Activated CD4-positive, alpha-beta T cell treated with anti-CD3 and anti-CD28 coated beads, Interleukin-2, amount 10 ng/mL, durations not matched to agents 7 days and 5 days (primary cell): ENCODE measurements at regions of chr15 and their contacts with region 1.

Region 1: GRCh38 chr15:89993349-89993748 is 7.8 kb upstream of the ZNF710 start:
- DNase-seq: no peak
- H3K4me3 Mint-ChIP-seq: no peak overlapping the region
- H3K27ac Mint-ChIP-seq: no peak overlapping the region
- H3K4me1 Mint-ChIP-seq: peaks cover 2% of the 10 kb centered on the region
- H3K27me3 Mint-ChIP-seq: peaks cover 8% of the 10 kb centered on the region

Region 2: DNA sequence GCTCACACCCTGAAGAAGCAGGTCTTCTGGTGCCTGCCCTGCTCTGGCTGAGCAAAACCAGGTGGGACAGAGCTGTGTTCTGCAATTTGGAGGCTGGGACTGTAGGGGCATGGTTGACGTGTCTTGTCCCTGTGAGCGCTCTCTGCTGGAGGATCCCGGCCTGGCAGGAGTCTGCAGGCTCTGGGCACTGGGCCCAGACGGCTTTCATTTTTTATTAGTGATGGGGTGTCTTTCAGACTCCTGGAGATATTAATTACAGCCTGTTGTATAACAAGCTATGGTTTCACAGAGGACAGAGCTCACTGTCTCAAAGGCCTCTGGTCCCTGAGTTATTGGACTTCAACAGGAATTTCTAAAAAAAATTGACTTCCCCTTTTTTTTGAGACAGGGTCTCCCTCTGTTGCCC is 21.8 kb before region 1 on chr15:
- CTCF ChIA-PET with region 1: interaction called, 4 read pairs
- POLR2A ChIA-PET with region 1: interaction called, 10 read pairs
- DNase-seq: peak; percentile 61
- H3K4me3 Mint-ChIP-seq: no peak overlapping the region
- H3K27ac Mint-ChIP-seq: no peak overlapping the region
- H3K4me1 Mint-ChIP-seq: peaks cover 7% of the 10 kb centered on the region
- H3K27me3 Mint-ChIP-seq: peaks cover 6% of the 10 kb centered on the region

Region 3: GRCh38 chr15:90022905-90023700 is 29.8 kb after region 1 on chr15:
- CTCF ChIA-PET with region 1: no interaction called
- POLR2A ChIA-PET with region 1: no interaction called
- DNase-seq: no peak
- H3K4me3 Mint-ChIP-seq: no peak overlapping the region
- H3K27ac Mint-ChIP-seq: peak overlapping the region; percentile 6
- H3K4me1 Mint-ChIP-seq: peaks cover 42% of the 10 kb centered on the region
- H3K27me3 Mint-ChIP-seq: no peaks in the 10 kb centered on the region